Activated T-helper 1 cell treated with anti-CD3 and anti-CD28 coated beads, Interleukin-12 subunit alpha, Interleukin-12 subunit beta, Interleukin-2, Interleukin-4 antibody, amounts not matched to agents 30 ng/mL and 10 ng/mL and 1 ng/mL, durations not matched to agents 14 hours and 24 hours and 36 hours (primary cell): ENCODE measurements at regions of chr2 and their contacts with region 1.

Region 1: DNA sequence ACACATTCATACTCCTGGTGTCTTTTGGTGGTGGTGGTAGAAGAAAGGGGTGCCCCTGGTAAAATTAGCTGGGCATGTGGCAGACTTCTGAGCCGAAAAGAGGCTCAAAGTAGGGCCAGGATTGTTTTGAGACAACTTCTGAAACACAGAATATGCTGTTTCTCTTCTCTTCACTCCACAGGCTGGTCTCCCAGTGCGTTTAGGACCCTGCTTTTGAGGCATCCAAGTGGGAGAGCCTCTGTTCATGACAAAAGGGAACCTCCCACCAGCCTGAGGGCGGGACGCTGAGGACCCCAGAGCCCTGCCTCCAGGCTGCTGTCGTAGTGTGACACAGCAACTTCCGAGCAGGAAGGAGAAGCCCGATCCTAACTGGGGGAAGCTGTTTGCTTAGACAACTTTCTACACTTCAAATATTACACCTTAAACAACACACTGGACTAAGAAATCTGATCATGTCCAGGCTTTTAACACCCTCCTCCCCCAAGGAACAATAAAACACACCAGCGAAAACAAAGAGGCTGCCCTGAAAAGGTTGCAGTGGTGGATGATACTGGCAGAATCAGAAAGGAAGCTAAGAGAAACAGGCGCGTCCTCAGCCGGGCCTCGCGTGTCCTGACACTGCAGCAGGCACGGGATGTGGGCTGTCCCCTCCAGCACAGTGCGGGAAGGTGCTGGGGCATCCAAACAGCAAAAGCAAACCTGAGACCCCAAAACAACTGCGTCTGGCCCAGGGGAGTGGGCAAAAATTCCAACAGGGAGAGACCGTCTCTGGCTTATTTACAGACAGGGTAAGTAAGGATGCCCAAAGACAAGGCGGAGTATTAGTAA is 9.3 kb downstream of the SERTAD2 start:
- DNase-seq: peak; percentile 51
- H3K4me3 Mint-ChIP-seq: peak overlapping the region; percentile 86
- H3K27ac Mint-ChIP-seq: peak overlapping the region; percentile 90
- H3K4me1 Mint-ChIP-seq: peaks cover 82% of the 10 kb centered on the region
- H3K27me3 Mint-ChIP-seq: peaks cover 3% of the 10 kb centered on the region

Region 2: DNA sequence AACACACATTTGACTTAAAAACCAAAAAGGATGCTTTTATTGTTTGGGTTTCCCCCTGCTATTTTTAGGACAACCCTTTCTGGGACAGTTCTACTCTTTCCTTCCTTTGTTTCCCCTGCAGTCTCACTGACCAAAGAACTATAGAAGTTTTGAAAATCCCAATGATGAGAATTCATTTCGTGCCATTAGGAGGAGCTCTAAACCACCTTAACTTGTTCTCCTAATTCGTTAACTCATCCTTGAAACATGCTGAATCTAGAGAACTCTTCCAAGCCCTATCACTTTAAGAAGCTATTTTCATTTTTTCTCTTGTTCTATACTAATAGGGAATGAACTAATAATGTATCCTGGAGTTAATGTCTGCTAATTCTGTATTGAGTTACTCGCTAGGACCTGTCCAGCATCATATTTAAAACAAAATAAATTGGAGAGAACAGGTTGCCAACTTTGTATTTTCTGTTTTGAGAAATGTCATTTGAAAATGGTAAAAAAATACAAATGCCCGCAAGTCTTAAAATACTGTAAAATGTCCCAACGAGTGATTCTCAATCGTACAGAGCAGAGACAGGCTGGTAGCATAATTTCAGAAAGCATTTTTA is 57.4 kb before region 1 on chr2:
- intact Hi-C with region 1: loop called (anchors 1 kb)
- DNase-seq: no peak
- H3K4me3 Mint-ChIP-seq: no peak overlapping the region
- H3K27ac Mint-ChIP-seq: no peak overlapping the region
- H3K4me1 Mint-ChIP-seq: peaks cover 17% of the 10 kb centered on the region
- H3K27me3 Mint-ChIP-seq: no peaks in the 10 kb centered on the region

Region 3: GRCh38 chr2:64730551-64731262 is 86.3 kb after region 1 on chr2:
- intact Hi-C with region 1: loop called (anchors 1 kb)
- DNase-seq: peak; percentile 35
- H3K4me3 Mint-ChIP-seq: peak overlapping the region; percentile 85
- H3K27ac Mint-ChIP-seq: peak overlapping the region; percentile 89
- H3K4me1 Mint-ChIP-seq: peaks cover 77% of the 10 kb centered on the region
- H3K27me3 Mint-ChIP-seq: no peaks in the 10 kb centered on the region

Region 4: GRCh38 chr2:64865073-64865830 is 220.9 kb after region 1 on chr2:
- intact Hi-C with region 1: loop called (anchors 1 kb)
- DNase-seq: peak; percentile 61
- H3K4me3 Mint-ChIP-seq: peak overlapping the region; percentile 78
- H3K27ac Mint-ChIP-seq: peak overlapping the region; percentile 60
- H3K4me1 Mint-ChIP-seq: peaks cover 6% of the 10 kb centered on the region
- H3K27me3 Mint-ChIP-seq: peaks cover 13% of the 10 kb centered on the region

Region 5: DNA sequence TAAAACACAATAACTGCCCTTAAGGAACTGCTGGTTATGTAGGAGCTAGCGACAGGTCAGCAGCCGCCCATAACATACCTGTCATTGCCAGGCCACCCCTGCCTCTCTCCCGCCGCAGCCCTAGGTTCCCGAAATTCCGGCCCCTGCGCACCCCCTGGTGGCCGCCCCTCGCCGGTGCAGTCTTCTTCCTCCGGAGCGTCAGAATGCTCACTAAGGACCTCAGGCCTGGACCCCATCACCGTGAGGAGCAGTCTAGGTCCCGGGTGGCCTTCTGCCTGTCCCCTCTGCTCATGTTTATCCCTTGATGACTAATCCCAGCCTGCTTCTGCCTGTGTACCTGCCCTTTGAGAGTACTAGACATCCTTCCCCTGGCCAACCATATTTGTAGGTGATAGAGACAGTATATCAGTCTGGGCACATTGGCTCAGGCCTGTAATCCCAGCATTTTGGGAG is 229.1 kb after region 1 on chr2:
- intact Hi-C with region 1: loop called (anchors 2 kb)
- DNase-seq: peak; percentile 74
- H3K4me3 Mint-ChIP-seq: no peak overlapping the region
- H3K27ac Mint-ChIP-seq: no peak overlapping the region
- H3K4me1 Mint-ChIP-seq: peaks cover 8% of the 10 kb centered on the region
- H3K27me3 Mint-ChIP-seq: peaks cover 26% of the 10 kb centered on the region